ENCODE measurements at regions of chr12 and their contacts with region 1.

Region 1: DNA sequence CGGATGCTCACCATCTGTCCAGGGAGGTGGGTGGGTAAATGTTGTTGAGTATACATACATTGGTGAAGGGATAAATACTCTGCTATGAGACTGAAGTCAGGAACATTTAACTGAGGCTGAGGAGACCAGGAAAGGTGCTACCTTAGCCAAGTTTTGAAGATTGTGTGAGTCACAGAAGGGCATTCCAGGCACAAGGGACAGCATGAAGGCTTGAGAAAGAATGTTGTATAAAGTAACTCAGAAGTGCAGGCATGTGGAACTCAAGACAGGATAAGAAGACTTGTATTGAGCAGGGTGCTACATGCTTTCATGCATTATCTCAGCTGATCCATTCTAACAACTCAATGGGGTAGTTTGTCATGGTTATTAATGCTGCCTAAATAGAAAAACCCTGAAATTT is 112.7 kb downstream of the IPO8 start:
- DNase-seq: no peak
- H3K4me3 ChIP-seq: no peak overlapping the region
- H3K27ac ChIP-seq: no peak overlapping the region
- H3K27me3 ChIP-seq: no peaks in the 10 kb centered on the region
- CTCF ChIP-seq: no peak

Region 2: DNA sequence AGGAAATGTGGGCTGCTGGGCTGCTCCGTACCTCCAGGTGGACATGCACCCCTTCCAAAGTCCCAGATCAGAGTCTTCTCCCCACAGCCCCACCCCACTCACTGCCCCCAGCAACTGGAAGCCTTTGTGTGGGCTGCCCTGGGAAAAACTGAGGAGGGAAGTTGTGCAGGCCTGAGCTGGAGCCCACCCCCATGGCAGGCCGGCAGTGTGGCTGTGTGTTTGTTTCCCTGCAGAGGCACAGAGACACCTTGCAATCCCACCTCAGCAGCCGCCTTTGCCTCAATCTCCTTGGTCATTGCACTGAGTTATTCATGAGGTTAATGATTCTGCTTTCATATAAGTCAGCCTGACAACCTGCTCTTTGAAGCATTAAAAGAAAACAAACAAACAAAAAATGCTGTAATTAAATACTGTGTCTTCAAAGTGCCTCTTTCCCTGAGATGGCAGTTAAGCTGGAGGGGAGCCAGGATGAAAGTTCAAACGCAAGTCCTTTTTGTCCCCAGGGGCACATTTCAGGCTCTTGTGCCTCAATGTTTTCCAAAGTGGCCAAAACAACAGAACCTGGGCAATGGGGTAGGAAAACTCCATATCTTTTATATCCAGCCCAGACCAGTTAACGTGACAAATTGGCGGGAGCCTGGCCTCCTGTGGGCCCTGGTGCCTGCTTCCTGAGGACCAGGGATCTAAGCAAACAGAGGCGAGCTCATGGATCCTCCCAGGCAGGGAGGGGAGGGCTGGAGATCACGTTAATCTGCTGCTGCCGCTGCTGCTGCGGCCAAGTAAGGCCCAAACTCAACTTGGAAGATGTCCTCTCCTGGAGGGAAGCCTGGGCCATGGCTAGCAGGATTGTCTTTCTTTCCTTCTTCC is 291.7 kb after region 1 on chr12:
- intact Hi-C with region 1: loop called in 1 of 2 experiments (anchors 5 kb)
- DNase-seq: no peak
- H3K4me3 ChIP-seq: no peak overlapping the region
- H3K27ac ChIP-seq: no peak overlapping the region
- H3K27me3 ChIP-seq: peaks cover 0 to 7% (median 0%) of the 10 kb centered on the region in 45 donors
- CTCF ChIP-seq: no peak

Measured in dorsolateral prefrontal cortex (tissue), 120 donors.